Head of caudate nucleus (tissue), 42 donors: ENCODE measurements at regions of chr1 and their contacts with region 1.

Region 1: DNA sequence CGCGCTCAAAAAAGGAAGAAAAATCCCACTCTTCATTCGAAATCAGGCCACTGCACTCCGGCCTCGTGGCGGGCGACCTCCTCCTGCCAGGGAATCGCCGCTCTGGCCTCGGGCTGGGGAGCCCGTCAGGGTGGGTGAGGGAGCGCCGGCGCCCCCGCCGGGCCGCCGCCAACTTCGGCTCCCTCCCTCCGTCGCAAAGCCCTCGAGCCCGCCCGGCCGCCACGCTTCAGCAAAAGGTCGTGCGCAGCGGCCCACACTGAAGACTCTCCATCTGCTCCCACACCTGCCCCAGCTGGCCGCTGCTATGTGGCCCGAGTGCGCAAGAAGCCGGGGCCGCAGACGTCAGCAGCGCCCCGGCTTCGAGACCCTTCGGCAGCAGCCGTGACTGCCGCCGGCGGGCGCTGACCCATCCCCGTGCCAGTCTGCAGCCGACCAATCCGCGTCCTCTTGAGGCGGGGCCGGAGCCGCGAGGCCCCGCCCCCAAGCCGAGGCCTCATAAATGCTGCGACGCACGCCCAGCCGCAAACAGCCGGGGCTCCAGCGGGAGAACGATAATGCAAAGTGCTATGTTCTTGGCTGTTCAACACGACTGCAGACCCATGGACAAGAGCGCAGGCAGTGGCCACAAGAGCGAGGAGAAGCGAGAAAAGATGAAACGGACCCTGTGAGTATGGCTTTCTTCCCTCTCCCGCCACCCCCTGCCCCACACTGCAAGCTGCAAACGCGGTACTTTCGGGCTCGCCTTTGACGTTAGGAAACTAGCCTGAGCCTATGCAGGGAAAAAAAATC is at the start of gene RGS2:
- DNase-seq: peak; percentile 88 to 98 (median 96)

Region 2: GRCh38 chr1:192477630-192478029 is 331.1 kb before region 1 on chr1:
- intact Hi-C with region 1: loop called (anchors 10 kb)
- DNase-seq: no peak

Region 3: DNA sequence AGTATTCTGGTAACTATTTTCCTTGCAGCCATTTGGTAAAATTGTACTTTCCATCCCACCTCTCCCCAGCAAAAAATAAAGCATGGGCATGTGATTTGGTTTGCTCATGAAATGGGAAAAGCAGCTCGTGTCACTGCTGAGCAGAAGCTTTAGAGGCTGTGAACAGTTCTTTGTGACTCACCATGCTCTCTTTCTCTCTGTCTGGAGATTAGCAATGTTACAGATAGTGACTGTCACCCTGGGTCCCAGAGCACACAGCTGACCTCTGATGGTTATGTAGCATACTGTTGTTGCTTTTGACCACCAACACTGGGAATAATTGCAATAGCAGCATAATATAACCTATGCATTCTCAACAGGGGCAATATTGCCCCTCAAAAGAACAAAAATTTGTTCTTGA is 70.7 kb after region 1 on chr1:
- intact Hi-C with region 1: no loop called
- DNase-seq: no peak

Region 4: GRCh38 chr1:192904438-192904895 is 95.8 kb after region 1 on chr1:
- intact Hi-C with region 1: no loop called
- DNase-seq: peak in 1 of 42 donors; percentile 6

Region 5: GRCh38 chr1:193019442-193020026 is 210.8 kb after region 1 on chr1:
- intact Hi-C with region 1: loop called (anchors 10 kb)
- DNase-seq: peak in 4 of 42 donors; percentile 9 to 26 (median 14)

Region 6: DNA sequence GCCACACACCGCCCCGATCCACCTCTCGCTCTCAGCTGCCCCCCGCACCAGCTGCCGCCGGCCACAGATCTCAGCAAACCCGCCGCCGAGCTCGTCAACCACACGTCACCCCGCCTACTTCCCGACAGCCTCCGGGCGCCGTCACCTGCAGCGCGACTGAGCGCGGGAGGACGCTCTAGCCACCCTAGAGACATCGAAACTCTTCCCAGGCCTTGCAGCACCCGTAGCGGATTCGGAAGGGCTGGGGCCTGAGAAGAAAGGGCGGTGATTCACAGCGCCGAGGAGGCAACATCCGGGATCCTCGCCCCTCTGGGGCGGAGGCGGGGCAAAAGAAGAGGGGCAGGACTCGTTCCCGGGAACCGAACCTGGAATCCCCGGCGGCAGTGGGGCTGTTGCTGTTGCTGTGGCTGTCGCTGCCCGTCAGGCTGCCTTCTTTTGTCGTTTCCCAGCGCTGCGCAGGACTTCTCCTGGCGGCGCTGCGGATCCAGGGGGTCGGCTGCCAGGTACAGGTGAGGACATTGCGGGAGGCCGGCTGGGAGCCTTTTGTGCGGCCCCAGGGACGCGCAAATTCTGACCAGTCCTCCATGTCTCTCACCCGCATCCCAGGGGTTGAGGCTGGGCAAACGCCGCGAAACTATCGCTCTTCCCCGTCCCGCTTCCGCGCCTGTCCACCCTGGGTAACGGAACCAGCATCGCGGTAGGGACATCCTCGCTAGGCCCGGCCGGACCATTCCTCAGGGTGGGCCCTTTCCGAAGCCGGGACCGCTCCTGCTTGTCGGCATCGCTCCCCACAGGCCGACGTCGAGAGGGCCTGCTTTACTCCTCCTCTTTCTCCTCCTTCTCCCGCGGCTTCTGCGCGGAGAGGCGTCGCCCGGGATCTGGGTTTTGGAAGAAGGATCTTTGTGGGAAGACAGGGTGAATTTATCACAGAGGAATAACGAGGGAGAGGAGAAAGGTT is 250.8 kb after region 1 on chr1 and contains the starts of genes RO60 and UCHL5:
- intact Hi-C with region 1: loop called (anchors 2 kb)
- DNase-seq: peak; percentile 95 to 99 (median 97)

Region 7: GRCh38 chr1:193121616-193122593 is 313.2 kb after region 1 on chr1 and contains the start of gene CDC73:
- intact Hi-C with region 1: loop called (anchors 5 kb)
- DNase-seq: peak; percentile 90 to 99 (median 98)